Left ventricle myocardium inferior (tissue), 1 donor: ENCODE measurements at regions of chr1 and their contacts with region 1.

Region 1: DNA sequence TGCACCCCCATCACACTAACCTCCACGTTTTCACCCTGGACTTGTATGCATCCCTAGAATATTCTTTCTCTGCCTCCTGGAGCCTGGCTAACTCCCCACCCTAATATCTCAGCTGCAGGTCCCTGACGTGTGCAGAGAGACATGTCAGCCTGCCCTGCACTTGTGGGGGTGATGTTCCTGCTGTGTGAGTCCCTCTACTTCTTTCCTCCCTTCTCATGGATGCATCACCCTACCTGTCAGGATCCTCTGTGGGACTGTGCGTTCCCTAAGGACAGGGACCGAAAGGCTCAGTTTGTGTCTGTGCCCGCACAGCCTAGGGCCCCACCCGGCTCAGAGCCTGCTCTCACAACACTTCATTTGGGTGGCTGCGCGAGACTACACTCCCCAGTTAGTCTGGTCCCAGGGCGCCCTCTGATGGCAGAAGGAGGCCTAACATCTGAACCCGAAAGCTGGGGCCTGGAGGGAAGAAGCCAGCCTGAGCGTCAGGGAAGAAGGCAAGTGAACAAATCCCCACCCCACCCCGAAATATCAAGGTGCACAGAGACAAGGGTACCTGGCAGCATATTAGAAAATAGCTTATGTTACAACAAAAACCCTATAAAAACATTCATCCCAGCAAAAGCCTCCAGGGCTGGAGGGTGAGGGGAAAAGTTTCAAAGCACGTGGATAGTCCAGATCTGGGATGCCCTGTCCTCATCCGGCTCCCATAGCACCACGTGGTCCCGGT is 3.7 kb downstream of the CD52 start:
- DNase-seq: peak; percentile 91
- H3K4me3 ChIP-seq: no peak overlapping the region
- H3K27ac ChIP-seq: no peak overlapping the region
- H3K4me1 ChIP-seq: peaks cover 16% of the 10 kb centered on the region
- H3K27me3 ChIP-seq: peaks cover 9% of the 10 kb centered on the region
- CTCF ChIP-seq: peak; percentile 89

Region 2: DNA sequence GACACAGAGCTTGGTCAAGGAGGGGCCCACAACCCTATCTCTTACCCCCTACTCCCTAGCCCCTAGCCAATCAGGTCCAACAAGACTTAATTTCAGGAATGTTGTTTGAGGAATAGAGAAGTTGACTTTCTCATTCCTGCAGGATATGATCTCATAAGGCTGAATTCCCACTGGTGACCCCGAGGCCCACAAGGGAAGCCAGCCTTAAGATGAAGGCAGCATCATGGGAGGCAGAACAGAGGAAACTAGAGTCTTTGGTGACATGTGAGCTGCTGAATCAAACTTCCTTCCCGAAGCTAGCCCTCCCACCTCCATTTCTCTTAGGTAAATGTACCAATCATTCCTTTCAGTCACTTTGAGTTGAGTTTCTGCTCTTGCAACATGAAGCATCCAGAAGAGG is 219.0 kb before region 1 on chr1:
- intact Hi-C with region 1: loop called (anchors 10 kb)
- DNase-seq: no peak
- H3K4me3 ChIP-seq: no peak overlapping the region
- H3K27ac ChIP-seq: no peak overlapping the region
- H3K4me1 ChIP-seq: peaks cover 17% of the 10 kb centered on the region
- H3K27me3 ChIP-seq: no peaks in the 10 kb centered on the region
- CTCF ChIP-seq: no peak

Region 3: DNA sequence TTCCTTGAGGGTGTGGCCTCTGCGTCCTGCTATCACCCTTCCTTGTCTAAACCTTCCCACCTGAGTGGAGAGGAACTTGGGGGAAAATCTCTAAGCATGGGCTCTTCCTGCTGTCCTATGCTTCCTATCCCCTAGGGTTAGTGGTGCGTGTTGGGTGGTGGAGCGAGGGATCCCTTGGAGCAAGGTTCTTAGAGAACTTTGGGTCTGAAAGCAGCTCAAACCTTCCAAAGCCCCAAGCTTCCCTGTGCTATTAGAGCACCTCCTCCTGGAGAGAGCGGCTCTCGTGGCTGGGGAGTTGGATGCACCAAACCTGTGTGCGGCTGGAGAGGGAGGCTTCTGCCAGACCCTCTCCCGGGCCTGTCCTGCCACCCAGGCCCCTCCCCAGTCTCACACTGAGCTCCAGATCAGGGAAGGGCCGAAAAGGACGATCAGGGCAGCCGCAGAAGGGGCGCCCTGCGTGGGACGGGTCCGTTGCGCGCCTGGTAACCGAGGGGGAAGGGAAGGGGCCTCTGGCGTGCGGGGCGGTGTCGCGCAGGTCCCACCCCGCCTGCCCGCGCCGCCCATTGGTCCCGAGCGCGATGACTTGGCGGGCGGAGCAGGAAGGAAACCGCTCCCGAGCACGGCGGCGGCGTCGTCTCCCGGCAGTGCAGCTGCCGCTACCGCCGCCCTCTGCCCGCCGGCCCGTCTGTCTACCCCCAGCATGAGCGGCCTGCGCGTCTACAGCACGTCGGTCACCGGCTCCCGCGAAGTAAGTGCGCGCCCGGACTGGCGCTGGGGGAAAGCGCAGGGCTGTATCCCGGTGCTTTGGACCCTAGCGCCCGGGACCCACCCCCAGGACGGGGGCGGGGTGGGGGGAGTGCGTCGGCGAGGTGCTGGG is 41.8 kb before region 1 on chr1 and contains the start of gene SH3BGRL3:
- intact Hi-C with region 1: loop called (anchors 5 kb)
- DNase-seq: peak; percentile 92
- H3K4me3 ChIP-seq: peak within 1 kb of the TSS; percentile 92
- H3K27ac ChIP-seq: peak within 1 kb of the TSS; percentile 98
- H3K4me1 ChIP-seq: peaks cover 92% of the 10 kb centered on the region
- H3K27me3 ChIP-seq: no peaks in the 10 kb centered on the region
- CTCF ChIP-seq: peak; percentile 47
- total RNA-seq, gene SH3BGRL3: 32.1 TPM